ENCODE measurements at regions of chr2 and their contacts with region 1.

Region 1: DNA sequence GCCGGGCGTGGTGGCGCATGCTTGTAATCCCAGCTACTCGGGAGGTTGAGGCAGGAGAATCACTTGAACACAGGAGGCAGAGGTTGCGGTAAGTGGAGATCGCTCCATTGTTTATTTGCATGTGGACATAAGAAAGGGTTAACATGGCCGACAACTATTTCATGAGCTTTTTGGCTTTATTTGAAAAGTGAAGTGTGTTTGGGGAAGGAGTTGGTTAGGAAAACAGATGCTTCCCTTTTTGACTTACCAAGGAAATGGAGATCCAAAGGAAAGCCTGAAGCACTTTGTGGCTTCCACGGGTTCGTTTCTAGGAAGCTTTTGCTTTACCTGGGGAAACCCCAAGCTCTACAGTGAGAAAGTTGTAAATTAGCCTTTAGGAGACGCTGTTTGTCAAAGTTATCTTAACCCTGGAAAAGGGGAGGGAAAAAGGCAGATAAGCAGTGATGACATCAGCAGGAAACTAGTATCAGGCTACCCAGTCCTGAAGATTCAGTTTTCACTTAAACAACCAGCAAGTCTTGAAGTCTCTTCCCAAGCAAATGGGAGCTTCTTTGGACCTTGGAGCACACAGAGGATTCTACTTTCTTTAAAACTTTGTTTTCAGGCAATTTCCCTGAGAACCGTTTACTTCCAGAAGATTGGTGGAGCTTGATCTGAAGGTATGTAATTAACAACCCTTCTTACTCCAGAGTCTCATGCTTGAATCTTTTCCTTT is at the start of gene CASP10:
- DNase-seq: no peak
- H3K4me3 ChIP-seq: peak within 1 kb of the TSS; percentile 38 to 50 (median 42)
- H3K27ac ChIP-seq: peak within 1 kb of the TSS; percentile 17 to 38 (median 30)
- H3K4me1 ChIP-seq: peaks cover 0 to 1% (median under 1%) of the 10 kb centered on the region in 4 donors
- H3K27me3 ChIP-seq: no peaks in the 10 kb centered on the region
- CTCF ChIP-seq: peak in 1 of 3 experiments; percentile 30
- EP300 ChIP-seq: no peak
- POLR2A ChIP-seq: no peak
- total RNA-seq, gene CASP10: 2.2 to 7.3 (median 4.3) TPM

Region 2: GRCh38 chr2:200618587-200619021 is 564.2 kb before region 1 on chr2:
- intact Hi-C with region 1: no loop called
- DNase-seq: peak; percentile 70
- H3K4me3 ChIP-seq: no peak overlapping the region
- H3K27ac ChIP-seq: no peak overlapping the region
- H3K4me1 ChIP-seq: peaks cover 0 to 10% (median 7%) of the 10 kb centered on the region in 4 donors
- H3K27me3 ChIP-seq: no peaks in the 10 kb centered on the region
- CTCF ChIP-seq: no peak
- EP300 ChIP-seq: no peak
- POLR2A ChIP-seq: no peak

Region 3: GRCh38 chr2:200963124-200963917 is 219.5 kb before region 1 on chr2 and contains the start of gene ORC2:
- intact Hi-C with region 1: loop called (anchors 5 kb)
- DNase-seq: peak; percentile 97
- H3K4me3 ChIP-seq: peak within 1 kb of the TSS; percentile 72 to 94 (median 83)
- H3K27ac ChIP-seq: peak within 1 kb of the TSS; percentile 82 to 94 (median 90)
- H3K4me1 ChIP-seq: peaks cover 27 to 49% (median 32%) of the 10 kb centered on the region in 4 donors
- H3K27me3 ChIP-seq: no peaks in the 10 kb centered on the region
- CTCF ChIP-seq: peak; percentile 28 to 70 (median 30)
- EP300 ChIP-seq: no peak
- POLR2A ChIP-seq: no peak
- total RNA-seq, gene ORC2: 9.4 to 15.0 (median 10.8) TPM

Region 4: GRCh38 chr2:201220102-201220570 is 37.3 kb after region 1 on chr2:
- intact Hi-C with region 1: no loop called
- DNase-seq: no peak
- H3K4me3 ChIP-seq: no peak overlapping the region
- H3K27ac ChIP-seq: no peak overlapping the region
- H3K4me1 ChIP-seq: peaks cover 0 to 17% (median 9%) of the 10 kb centered on the region in 4 donors
- H3K27me3 ChIP-seq: no peaks in the 10 kb centered on the region
- CTCF ChIP-seq: no peak
- EP300 ChIP-seq: no peak
- POLR2A ChIP-seq: no peak